Heart left ventricle (tissue), 16 donors: ENCODE measurements at regions of chr1 and their contacts with region 1.

Region 1: DNA sequence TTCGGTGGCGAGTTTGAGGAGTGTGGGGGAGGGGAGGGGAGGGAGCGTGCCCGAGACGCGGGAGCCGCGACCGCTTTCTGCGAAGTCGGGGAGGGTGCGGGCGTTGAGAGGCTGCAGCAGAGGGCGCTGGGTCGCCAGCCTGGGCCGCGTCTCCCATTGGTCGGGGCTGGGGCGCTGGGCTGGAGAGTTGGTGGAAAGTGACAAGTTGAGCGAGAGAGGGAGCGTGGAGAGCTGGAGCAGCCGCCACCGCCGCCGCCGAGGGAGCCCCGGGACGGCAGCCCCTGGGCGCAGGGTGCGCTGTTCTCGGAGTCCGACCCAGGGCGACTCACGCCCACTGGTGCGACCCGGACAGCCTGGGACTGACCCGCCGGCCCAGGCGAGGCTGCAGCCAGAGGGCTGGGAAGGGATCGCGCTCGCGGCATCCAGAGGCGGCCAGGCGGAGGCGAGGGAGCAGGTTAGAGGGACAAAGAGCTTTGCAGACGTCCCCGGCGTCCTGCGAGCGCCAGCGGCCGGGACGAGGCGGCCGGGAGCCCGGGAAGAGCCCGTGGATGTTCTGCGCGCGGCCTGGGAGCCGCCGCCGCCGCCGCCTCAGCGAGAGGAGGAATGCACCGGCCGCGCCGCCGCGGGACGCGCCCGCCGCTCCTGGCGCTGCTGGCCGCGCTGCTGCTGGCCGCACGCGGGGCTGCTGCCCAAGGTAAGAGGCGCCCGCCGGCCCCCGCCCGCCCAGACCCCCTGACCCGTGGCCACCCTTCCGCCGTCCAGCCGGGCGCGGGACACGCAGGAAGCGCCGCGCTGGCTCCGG is at the start of gene ROR1:
- DNase-seq: peak; percentile 89 to 93 (median 91)
- ATAC-seq: peak; percentile 92 to 97 (median 96)
- H3K4me3 ChIP-seq: peak within 1 kb of the TSS; percentile 60 to 94 (median 73)
- H3K27ac ChIP-seq: peak within 1 kb of the TSS; percentile 75 to 99 (median 94)
- H3K4me1 ChIP-seq: peaks cover 0 to 37% (median 11%) of the 10 kb centered on the region in 12 donors
- H3K27me3 ChIP-seq: peaks cover 0 to 46% (median 0%) of the 10 kb centered on the region in 9 donors
- CTCF ChIP-seq: peak; percentile 29 to 80 (median 64)
- POLR2A ChIP-seq: peak in 1 of 2 donors; percentile 75
- total RNA-seq, gene ROR1: 13.4 to 35.3 (median 19.6) TPM

Region 2: GRCh38 chr1:63624911-63625310 is 149.1 kb before region 1 on chr1:
- intact Hi-C with region 1: loop called in 1 of 10 experiments (anchors 10 kb)
- DNase-seq: no peak
- ATAC-seq: no peak
- H3K4me3 ChIP-seq: no peak overlapping the region
- H3K27ac ChIP-seq: peak overlapping the region in 3 of 12 donors; percentile 10 to 66 (median 48)
- H3K4me1 ChIP-seq: peaks cover 0 to 58% (median 18%) of the 10 kb centered on the region in 12 donors
- H3K27me3 ChIP-seq: no peaks in the 10 kb centered on the region
- CTCF ChIP-seq: no peak
- POLR2A ChIP-seq: no peak

Region 3: DNA sequence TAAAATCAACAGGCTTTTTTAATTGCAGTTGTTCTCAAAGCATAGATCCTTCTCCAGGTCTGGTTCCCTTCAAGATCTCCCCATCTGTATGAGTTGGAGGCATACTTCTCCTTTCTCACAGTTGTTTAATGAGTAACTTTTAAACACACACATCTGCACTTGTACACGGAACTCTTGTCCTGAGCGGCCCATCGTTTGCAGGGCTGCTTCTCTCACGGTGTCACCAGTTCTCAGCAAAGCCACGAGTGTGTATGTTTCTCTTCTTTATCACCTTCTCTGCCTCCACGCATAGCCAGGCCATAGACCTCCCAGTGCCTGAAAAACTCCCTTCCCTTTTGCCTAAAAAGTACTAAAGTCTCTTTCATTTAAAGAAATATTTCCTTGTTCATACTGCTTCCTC is 68.9 kb before region 1 on chr1:
- intact Hi-C with region 1: loop called in 3 of 10 experiments (anchors 5 to 10 kb)
- DNase-seq: no peak
- ATAC-seq: no peak
- H3K4me3 ChIP-seq: no peak overlapping the region
- H3K27ac ChIP-seq: no peak overlapping the region
- H3K4me1 ChIP-seq: peaks cover 0 to 22% (median 5%) of the 10 kb centered on the region in 12 donors
- H3K27me3 ChIP-seq: no peaks in the 10 kb centered on the region
- CTCF ChIP-seq: no peak
- POLR2A ChIP-seq: no peak

Region 4: DNA sequence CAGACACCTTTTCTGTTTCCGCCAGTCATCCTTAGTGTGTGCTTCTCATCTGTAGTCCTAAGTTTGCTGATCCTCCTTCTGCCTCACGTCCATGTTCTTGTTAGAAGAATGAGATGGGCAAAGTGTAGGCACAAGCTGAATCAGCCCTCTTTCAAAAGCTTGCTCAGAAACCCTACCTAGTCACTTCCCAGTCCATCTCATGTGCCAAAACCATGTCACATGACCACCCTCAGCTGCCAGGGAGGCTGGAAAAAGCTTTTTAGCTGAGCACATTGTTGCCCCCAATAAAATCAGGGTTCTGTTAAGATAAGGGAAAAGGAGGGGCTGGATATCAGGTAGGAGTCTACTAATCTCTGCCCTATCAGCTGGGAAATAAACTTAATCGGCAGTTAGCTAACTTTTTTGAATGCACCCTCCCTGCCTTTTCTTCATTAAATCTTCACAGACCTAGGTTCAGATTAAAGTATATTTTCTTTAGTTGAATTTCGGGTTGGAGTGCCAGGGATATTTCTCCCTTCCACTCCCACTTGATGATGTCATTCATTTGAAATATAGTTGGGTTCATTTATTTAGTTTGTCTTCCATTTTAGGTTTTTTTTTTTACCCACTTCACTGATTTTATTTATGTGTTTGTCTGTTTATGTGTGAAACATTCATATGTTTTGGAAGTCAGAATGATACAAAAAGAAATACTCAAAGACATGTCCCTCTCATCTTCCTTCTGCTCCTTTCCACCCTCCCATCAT is 129.0 kb after region 1 on chr1:
- intact Hi-C with region 1: loop called in 3 of 10 experiments (anchors 5 to 10 kb)
- DNase-seq: no peak
- ATAC-seq: peak in 2 of 4 donors; percentile 24 to 43
- H3K4me3 ChIP-seq: no peak overlapping the region
- H3K27ac ChIP-seq: no peak overlapping the region
- H3K4me1 ChIP-seq: peaks cover 0 to 35% (median 13%) of the 10 kb centered on the region in 12 donors
- H3K27me3 ChIP-seq: no peaks in the 10 kb centered on the region
- CTCF ChIP-seq: no peak
- POLR2A ChIP-seq: no peak

Region 5: GRCh38 chr1:64038965-64039926 is 265.2 kb after region 1 on chr1:
- intact Hi-C with region 1: loop called in 2 of 10 experiments (anchors 10 kb)
- DNase-seq: peak in 3 of 5 donors; percentile 31 to 37 (median 33)
- ATAC-seq: peak; percentile 46 to 78 (median 70)
- H3K4me3 ChIP-seq: no peak overlapping the region
- H3K27ac ChIP-seq: peak overlapping the region in 11 of 12 donors; percentile 8 to 88 (median 78)
- H3K4me1 ChIP-seq: peaks cover 0 to 57% (median 24%) of the 10 kb centered on the region in 12 donors
- H3K27me3 ChIP-seq: no peaks in the 10 kb centered on the region
- CTCF ChIP-seq: no peak
- POLR2A ChIP-seq: no peak

Region 6: GRCh38 chr1:64242895-64243756 is 469.1 kb after region 1 on chr1:
- intact Hi-C with region 1: loop called in 5 of 10 experiments (anchors 5 to 10 kb)
- DNase-seq: no peak
- ATAC-seq: peak in 1 of 4 donors; percentile 49
- H3K4me3 ChIP-seq: no peak overlapping the region
- H3K27ac ChIP-seq: no peak overlapping the region
- H3K4me1 ChIP-seq: peaks cover 0 to 16% (median 3%) of the 10 kb centered on the region in 12 donors
- H3K27me3 ChIP-seq: no peaks in the 10 kb centered on the region
- CTCF ChIP-seq: peak; percentile 13 to 58 (median 42)
- POLR2A ChIP-seq: no peak